SK-N-SH (cell line): ENCODE measurements at regions of chr7 and their contacts with region 1.

Region 1: GRCh38 chr7:140479062-140479738 is at the start of gene MKRN1:
- DNase-seq: peak; percentile 99
- H3K4me3 ChIP-seq: peak within 1 kb of the TSS; percentile 65 to 81
- H3K27ac ChIP-seq: peak within 1 kb of the TSS; percentile 70 to 71
- H3K4me1 ChIP-seq: peaks cover 4 to 7% of the 10 kb centered on the region in 2 experiments; a peak in 2 of 4 replicates
- H3K27me3 ChIP-seq: peaks cover 8% of the 10 kb centered on the region; the same call in 1 of the 2 replicates
- CTCF ChIP-seq: no peak
- EP300 ChIP-seq: no peak
- RAD21 ChIP-seq: no peak
- polyA plus RNA-seq, gene MKRN1: 53.5 and 61.4 TPM in 2 replicates

Region 2: GRCh38 chr7:140494867-140495266 is 15.7 kb after region 1 on chr7:
- CTCF ChIA-PET with region 1: interaction called, 38 read pairs
- POLR2A ChIA-PET with region 1: no interaction called
- DNase-seq: no peak
- H3K4me3 ChIP-seq: no peak overlapping the region
- H3K27ac ChIP-seq: no peak overlapping the region
- H3K4me1 ChIP-seq: no peaks in the 10 kb centered on the region
- H3K27me3 ChIP-seq: no peaks in the 10 kb centered on the region
- CTCF ChIP-seq: no peak
- EP300 ChIP-seq: no peak
- RAD21 ChIP-seq: no peak

Region 3: DNA sequence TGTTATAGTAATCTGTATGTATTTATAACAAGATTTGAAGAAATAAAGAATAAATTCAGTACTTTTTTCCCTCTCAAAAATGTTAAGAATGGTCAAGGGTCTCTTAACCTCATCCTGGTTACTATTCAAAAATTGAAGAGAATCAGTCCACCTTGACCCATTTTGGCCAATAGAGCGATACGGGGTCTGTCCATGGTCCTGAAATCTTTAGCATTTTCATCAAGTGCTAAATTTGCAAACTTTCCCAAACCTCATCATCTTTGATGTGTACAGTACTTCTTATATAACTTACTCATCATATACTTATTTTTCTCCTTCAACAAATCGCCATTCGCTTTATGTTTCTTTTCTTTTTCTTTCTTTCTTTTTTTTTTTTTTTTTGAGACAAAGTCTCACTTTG is 618.2 kb after region 1 on chr7:
- CTCF ChIA-PET with region 1: no interaction called
- POLR2A ChIA-PET with region 1: no interaction called
- DNase-seq: no peak
- H3K4me3 ChIP-seq: no peak overlapping the region
- H3K27ac ChIP-seq: no peak overlapping the region
- H3K4me1 ChIP-seq: peaks cover 0 to 6% of the 10 kb centered on the region in 2 experiments; a peak in 1 of 4 replicates
- H3K27me3 ChIP-seq: no peaks in the 10 kb centered on the region
- CTCF ChIP-seq: no peak
- EP300 ChIP-seq: no peak
- RAD21 ChIP-seq: no peak